GM10248 (cell line): ENCODE measurements at regions of chr10 and their contacts with region 1.

Region 1: GRCh38 chr10:89007129-89007893 is 16.7 kb downstream of the FAS start:
- DNase-seq: no peak
- CTCF ChIP-seq: no peak

Region 2: DNA sequence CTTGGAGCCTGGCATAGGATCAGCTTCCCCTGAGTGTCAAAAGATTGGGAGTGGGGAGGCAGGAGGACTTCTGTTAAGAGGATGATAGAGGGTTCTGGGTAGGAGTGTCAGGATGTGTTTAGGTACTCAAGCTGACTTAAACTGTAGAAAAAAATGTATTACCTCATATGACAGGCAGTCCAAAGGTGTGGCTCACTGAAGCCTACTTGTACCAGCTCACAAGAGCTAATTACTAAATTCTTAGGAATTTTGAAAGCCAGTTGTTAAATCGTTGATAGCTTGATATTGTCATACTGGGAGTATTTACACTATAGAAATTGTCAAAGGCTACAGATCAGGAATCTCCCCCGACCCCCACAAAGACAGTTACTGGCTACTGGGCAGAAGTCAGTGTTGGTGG is 15.4 kb after region 1 on chr10:
- CTCF ChIA-PET with region 1: interaction called, 25 read pairs
- POLR2A ChIA-PET with region 1: no interaction called
- DNase-seq: no peak
- CTCF ChIP-seq: no peak

Region 3: GRCh38 chr10:89589101-89589720 is 581.9 kb after region 1 on chr10:
- CTCF ChIA-PET with region 1: no interaction called
- POLR2A ChIA-PET with region 1: no interaction called
- DNase-seq: no peak
- CTCF ChIP-seq: no peak